Gastrocnemius medialis (tissue), 4 donors: ENCODE measurements at regions of chr1 and their contacts with region 1.

Region 1: DNA sequence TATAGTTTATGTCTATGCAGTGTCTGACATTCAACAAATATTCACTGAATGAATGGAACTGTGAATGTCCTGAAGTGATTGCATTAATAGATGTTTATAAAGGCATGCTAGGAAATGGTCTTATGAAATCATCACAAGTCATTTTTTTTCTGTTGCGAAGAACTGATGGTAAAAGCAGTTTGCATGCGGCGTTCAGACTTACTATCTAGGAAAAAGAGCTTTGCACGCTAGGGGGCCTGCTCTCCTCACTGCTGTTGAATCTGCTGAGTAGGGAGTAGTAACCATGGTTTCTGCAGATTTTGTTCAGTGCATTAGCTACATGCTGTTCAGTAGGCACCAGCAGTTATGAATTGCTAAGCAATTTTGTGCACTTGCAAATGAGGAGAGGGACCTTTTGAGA is 57.9 kb downstream of the CENPF start:
- DNase-seq: peak in 1 of 2 donors; percentile 29
- ATAC-seq: peak; percentile 47 to 71
- H3K4me3 ChIP-seq: no peak overlapping the region
- H3K27ac ChIP-seq: no peak overlapping the region
- H3K4me1 ChIP-seq: no peaks in the 10 kb centered on the region
- H3K27me3 ChIP-seq: no peaks in the 10 kb centered on the region
- CTCF ChIP-seq: peak in 2 of 5 experiments; percentile 9 to 28
- POLR2A ChIP-seq: no peak

Region 2: GRCh38 chr1:215517441-215517891 is 856.6 kb after region 1 on chr1:
- in situ Hi-C with region 1: loop called in 3 of 4 experiments (anchors 10 to 25 kb)
- intact Hi-C with region 1: loop called (anchors 5 kb)
- DNase-seq: no peak
- ATAC-seq: no peak
- H3K4me3 ChIP-seq: no peak overlapping the region
- H3K27ac ChIP-seq: no peak overlapping the region
- H3K4me1 ChIP-seq: no peaks in the 10 kb centered on the region
- H3K27me3 ChIP-seq: no peaks in the 10 kb centered on the region
- CTCF ChIP-seq: no peak
- POLR2A ChIP-seq: no peak

Region 3: GRCh38 chr1:215526553-215527151 is 865.8 kb after region 1 on chr1:
- in situ Hi-C with region 1: loop called in 3 of 4 experiments (anchors 10 to 25 kb)
- intact Hi-C with region 1: loop called (anchors 5 kb)
- DNase-seq: no peak
- ATAC-seq: no peak
- H3K4me3 ChIP-seq: no peak overlapping the region
- H3K27ac ChIP-seq: no peak overlapping the region
- H3K4me1 ChIP-seq: no peaks in the 10 kb centered on the region
- H3K27me3 ChIP-seq: no peaks in the 10 kb centered on the region
- CTCF ChIP-seq: peak; percentile 53 to 70 (median 57)
- POLR2A ChIP-seq: no peak